Activated CD8-positive, alpha-beta T cell treated with anti-CD3 and anti-CD28 coated beads, Interleukin-2, amount 10 ng/mL, durations not matched to agents 7 days and 5 days (primary cell): ENCODE measurements at regions of chr10 and their contacts with region 1.

Region 1: DNA sequence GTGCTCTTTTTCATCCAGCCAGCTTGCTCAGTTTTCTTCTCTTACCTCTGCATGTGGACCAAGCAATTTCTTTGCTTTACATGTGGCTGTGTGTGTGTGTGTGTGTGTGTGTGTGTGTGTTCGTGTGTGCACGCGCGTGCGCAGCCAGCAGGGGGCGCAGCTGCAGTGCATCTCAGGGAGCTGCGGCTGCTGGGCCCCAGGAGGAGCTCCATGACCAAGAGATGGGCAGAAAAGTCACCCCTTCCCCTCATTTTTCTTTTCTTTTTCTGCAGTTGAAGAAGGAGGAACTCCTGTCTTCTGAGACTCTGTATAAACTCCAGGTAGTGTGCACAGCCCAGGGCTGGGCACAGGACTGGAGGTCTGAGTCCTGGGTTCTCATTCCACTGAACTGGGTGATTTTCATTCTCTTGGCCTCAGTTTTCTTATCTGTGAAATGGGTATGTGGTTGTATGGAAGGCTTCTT is 41.8 kb downstream of the BLNK start:
- DNase-seq: peak; percentile 77
- ATAC-seq: peak; percentile 86
- H3K4me3 Mint-ChIP-seq: no peak overlapping the region
- H3K27ac Mint-ChIP-seq: no peak overlapping the region
- H3K4me1 Mint-ChIP-seq: no peaks in the 10 kb centered on the region
- H3K27me3 Mint-ChIP-seq: peaks cover 2% of the 10 kb centered on the region

Region 2: DNA sequence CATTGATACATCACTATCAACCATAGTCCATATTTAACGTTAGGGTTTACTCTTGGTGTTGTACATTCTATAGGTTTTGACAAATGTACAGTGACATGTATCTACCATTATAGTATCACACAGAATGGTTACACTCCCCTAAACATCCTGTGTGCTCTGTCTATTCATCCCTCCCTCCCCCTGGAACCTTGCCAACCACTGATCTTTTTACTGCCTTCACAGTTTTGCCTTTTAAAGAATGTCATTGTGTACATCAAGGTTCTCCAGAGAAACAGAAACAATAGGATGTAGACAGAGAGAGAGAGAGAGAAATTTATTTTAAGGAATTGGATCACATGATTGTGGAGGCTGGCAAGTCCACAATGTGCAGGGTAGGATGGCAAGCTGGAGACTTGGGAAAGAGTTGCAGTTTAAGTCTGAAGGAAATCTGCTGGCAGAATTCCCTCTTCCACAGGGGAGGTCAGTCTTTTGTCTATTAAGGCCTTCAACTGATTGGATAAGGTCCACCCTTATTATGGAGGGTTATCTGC is 231.3 kb before region 1 on chr10:
- CTCF ChIA-PET with region 1: no interaction called
- POLR2A ChIA-PET with region 1: no interaction called
- DNase-seq: no peak
- ATAC-seq: no peak
- H3K4me3 Mint-ChIP-seq: no peak overlapping the region
- H3K27ac Mint-ChIP-seq: no peak overlapping the region
- H3K4me1 Mint-ChIP-seq: no peaks in the 10 kb centered on the region
- H3K27me3 Mint-ChIP-seq: no peaks in the 10 kb centered on the region

Region 3: GRCh38 chr10:96208271-96208670 is 21.3 kb before region 1 on chr10:
- CTCF ChIA-PET with region 1: interaction called, 17 read pairs
- POLR2A ChIA-PET with region 1: no interaction called
- DNase-seq: no peak
- ATAC-seq: no peak
- H3K4me3 Mint-ChIP-seq: no peak overlapping the region
- H3K27ac Mint-ChIP-seq: no peak overlapping the region
- H3K4me1 Mint-ChIP-seq: no peaks in the 10 kb centered on the region
- H3K27me3 Mint-ChIP-seq: peaks cover 8% of the 10 kb centered on the region

Region 4: DNA sequence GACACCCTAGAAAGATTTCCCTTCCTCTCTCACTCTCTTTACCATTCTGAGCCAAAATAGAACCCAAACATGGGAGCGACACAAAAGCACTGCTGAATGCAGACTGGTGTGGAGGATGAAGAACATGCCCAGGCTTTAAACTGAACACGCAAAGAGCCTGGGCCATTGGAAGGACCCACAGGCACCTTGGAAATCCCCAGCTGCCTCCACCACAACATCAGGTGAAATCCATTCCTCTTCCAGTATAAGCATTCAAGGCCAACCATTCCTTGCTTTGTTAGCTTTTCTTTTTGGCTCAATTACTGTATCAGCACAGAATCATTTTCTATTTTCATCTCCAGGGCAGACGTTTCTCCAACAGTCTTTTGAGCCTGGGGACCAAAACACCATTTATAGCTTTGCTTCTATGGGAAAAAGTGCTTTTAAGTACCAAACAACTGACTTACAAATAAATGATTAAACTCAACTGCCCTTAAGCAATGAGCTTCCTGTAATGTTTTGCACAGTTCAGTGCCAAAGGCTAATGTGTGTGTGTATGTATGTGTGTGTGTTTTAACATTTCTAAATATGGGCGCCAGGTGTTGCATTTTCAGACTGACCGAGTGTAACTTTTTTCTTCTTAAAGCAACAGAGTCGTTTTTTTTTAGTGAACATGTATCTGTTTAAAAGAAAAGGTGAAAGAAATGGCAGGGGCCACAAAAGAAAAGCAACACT is 58.0 kb after region 1 on chr10:
- CTCF ChIA-PET with region 1: interaction called, 140 read pairs
- POLR2A ChIA-PET with region 1: no interaction called
- DNase-seq: no peak
- ATAC-seq: no peak
- H3K4me3 Mint-ChIP-seq: peak overlapping the region; percentile 12
- H3K27ac Mint-ChIP-seq: no peak overlapping the region
- H3K4me1 Mint-ChIP-seq: peaks cover 14% of the 10 kb centered on the region
- H3K27me3 Mint-ChIP-seq: peaks cover 3% of the 10 kb centered on the region

Region 5: DNA sequence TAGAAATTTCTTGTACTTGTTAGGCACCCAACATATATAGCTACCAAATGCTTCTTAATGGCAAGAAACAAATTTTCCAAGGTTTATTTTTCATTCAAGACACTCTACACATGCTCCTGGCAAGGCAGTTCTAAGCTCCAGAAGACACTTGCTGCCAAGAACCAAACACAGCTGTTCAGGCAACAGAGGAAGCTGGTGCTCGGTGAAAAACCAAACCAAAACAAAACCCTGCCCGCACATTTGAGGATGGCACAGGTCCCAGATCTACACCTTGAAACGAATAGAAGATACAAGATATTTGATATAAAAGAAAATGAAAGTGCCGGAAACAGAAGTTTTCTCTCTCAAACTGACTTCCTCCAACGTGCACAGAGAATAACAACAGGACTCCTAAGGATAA is 69.8 kb after region 1 on chr10:
- CTCF ChIA-PET with region 1: interaction called, 140 read pairs
- POLR2A ChIA-PET with region 1: no interaction called
- DNase-seq: peak; percentile 30
- ATAC-seq: no peak
- H3K4me3 Mint-ChIP-seq: peak overlapping the region; percentile 42
- H3K27ac Mint-ChIP-seq: peak overlapping the region; percentile 63
- H3K4me1 Mint-ChIP-seq: peaks cover 17% of the 10 kb centered on the region
- H3K27me3 Mint-ChIP-seq: peaks cover 4% of the 10 kb centered on the region

Region 6: GRCh38 chr10:96317067-96317833 is 87.7 kb after region 1 on chr10:
- CTCF ChIA-PET with region 1: interaction called, 11 read pairs
- POLR2A ChIA-PET with region 1: no interaction called
- DNase-seq: no peak
- ATAC-seq: no peak
- H3K4me3 Mint-ChIP-seq: no peak overlapping the region
- H3K27ac Mint-ChIP-seq: no peak overlapping the region
- H3K4me1 Mint-ChIP-seq: no peaks in the 10 kb centered on the region
- H3K27me3 Mint-ChIP-seq: peaks cover 11% of the 10 kb centered on the region

Region 7: GRCh38 chr10:96468845-96469244 is 239.2 kb after region 1 on chr10:
- CTCF ChIA-PET with region 1: no interaction called
- POLR2A ChIA-PET with region 1: no interaction called
- DNase-seq: no peak
- ATAC-seq: no peak
- H3K4me3 Mint-ChIP-seq: no peak overlapping the region
- H3K27ac Mint-ChIP-seq: no peak overlapping the region
- H3K4me1 Mint-ChIP-seq: no peaks in the 10 kb centered on the region
- H3K27me3 Mint-ChIP-seq: peaks cover 11% of the 10 kb centered on the region